Prostate gland (tissue), 2 donors: ENCODE measurements at regions of chr17 and their contacts with region 1.

Region 1: GRCh38 chr17:53959876-53960275 is 137.1 kb downstream of the KIF2B start:
- DNase-seq: no peak
- H3K4me3 ChIP-seq: no peak overlapping the region
- H3K27ac ChIP-seq: no peak overlapping the region
- H3K4me1 ChIP-seq: no peaks in the 10 kb centered on the region
- H3K27me3 ChIP-seq: no peaks in the 10 kb centered on the region
- CTCF ChIP-seq: no peak
- POLR2A ChIP-seq: no peak

Region 2: GRCh38 chr17:53894591-53894990 is 65.3 kb before region 1 on chr17:
- intact Hi-C with region 1: loop called (anchors 10 kb)
- DNase-seq: no peak
- H3K4me3 ChIP-seq: no peak overlapping the region
- H3K27ac ChIP-seq: no peak overlapping the region
- H3K4me1 ChIP-seq: no peaks in the 10 kb centered on the region
- H3K27me3 ChIP-seq: no peaks in the 10 kb centered on the region
- CTCF ChIP-seq: no peak
- POLR2A ChIP-seq: no peak